B cell (primary cell): ENCODE measurements at regions of chr4 and their contacts with region 1.

Region 1: DNA sequence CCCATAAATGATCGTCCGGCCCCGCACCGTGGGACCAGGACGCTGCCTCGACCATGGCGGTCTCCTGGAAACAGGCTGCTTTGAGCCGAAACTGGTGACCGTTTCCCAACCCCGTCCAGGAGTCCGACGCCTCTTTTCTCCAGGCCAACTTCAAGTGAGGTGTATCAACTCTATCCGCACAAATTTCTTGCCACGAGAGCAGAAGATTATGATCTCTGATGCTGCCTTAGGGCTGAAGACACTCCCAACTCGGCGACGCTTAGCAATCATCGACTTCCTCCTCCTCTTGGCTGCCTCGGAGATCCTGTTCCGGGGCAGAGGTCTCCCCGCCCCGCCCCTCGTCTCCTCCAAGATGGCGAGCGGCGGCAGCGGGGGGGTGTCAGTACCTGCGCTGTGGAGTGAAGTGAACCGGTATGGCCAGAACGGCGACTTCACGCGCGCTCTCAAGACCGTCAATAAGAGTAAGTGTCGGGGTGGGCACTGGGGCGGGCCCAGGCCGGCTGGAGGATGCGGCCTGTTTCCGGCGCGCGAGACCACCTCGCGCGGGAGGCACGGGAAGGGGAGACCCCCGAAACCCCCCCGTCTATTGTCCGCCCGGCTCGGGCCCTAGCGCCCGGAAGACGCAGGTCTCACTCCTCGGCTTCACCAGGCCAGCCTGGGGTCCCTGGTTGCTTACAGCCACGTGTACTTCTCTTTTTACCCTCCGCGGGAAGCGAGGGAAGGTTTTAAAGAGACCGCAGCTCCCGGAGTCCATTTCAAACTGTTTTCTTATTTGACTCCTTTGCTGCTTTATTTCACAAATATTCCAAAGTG is at the start of gene SRP72:
- DNase-seq: peak; percentile 91
- ATAC-seq: peak; percentile 96
- H3K4me3 ChIP-seq: peak within 1 kb of the TSS; percentile 83 to 97 (median 89)
- H3K4me3 Mint-ChIP-seq: peak within 1 kb of the TSS; percentile 99
- H3K27ac ChIP-seq: peak within 1 kb of the TSS; percentile 73 to 81
- H3K27ac Mint-ChIP-seq: peak within 1 kb of the TSS; percentile 96
- H3K4me1 ChIP-seq: peaks cover 38 to 42% of the 10 kb centered on the region in 2 donors
- H3K4me1 Mint-ChIP-seq: peaks cover 56% of the 10 kb centered on the region
- H3K27me3 ChIP-seq: no peaks in the 10 kb centered on the region
- H3K27me3 Mint-ChIP-seq: no peaks in the 10 kb centered on the region
- CTCF ChIP-seq: no peak
- total RNA-seq, gene SRP72: 111 and 114 TPM in 2 replicates

Region 2: DNA sequence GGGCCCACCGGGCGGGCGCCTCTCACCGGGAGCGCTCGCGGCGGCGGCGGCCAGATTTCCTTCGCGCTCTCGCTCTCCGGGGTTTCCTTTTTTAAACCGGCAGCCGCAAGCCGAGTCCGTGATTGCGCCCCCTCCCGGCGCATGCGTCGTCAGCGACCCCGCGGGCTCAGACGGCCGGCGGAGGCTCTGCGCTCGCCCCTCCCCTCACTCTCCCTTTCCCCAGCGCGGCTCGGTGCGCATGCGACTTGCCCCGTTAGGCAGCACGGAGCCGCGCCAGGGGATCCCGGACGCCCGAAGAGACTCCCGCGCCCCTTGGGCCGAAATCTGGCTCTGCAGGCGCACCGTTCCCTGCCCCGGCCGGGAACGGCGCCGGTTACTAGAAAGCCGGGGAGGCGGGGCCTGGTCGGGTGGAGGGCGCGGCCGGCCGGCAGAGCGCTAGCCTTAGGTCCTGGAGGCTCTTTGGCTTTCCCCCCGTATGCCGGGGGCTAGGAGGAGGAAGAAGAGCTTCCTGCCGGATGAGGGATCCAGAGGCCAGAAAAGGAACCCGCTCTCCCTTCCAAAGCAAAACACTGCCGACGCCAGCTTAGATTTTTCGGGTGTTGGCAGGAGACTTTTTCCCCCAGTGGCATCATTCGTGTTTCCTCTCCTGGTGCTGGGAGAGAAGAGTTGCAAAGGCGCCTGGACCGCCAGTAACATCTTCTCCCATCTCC is 920.6 kb before region 1 on chr4 and contains the start of gene CLOCK:
- CTCF ChIA-PET with region 1: no interaction called
- POLR2A ChIA-PET with region 1: no interaction called
- intact Hi-C with region 1: loop called (anchors 10 kb)
- DNase-seq: peak; percentile 94
- ATAC-seq: peak; percentile 75
- H3K4me3 ChIP-seq: peak within 1 kb of the TSS; percentile 67 to 95 (median 79)
- H3K4me3 Mint-ChIP-seq: peak within 1 kb of the TSS; percentile 97
- H3K27ac ChIP-seq: peak within 1 kb of the TSS; percentile 59 to 84
- H3K27ac Mint-ChIP-seq: peak within 1 kb of the TSS; percentile 96
- H3K4me1 ChIP-seq: peaks cover 6 to 9% of the 10 kb centered on the region in 2 donors
- H3K4me1 Mint-ChIP-seq: peaks cover 31% of the 10 kb centered on the region
- H3K27me3 ChIP-seq: no peaks in the 10 kb centered on the region
- H3K27me3 Mint-ChIP-seq: peaks cover 6% of the 10 kb centered on the region
- CTCF ChIP-seq: peak; percentile 58
- total RNA-seq, gene CLOCK: 14.2 and 15.2 TPM in 2 replicates

Region 3: GRCh38 chr4:56240554-56241174 is 226.8 kb before region 1 on chr4:
- CTCF ChIA-PET with region 1: no interaction called
- POLR2A ChIA-PET with region 1: no interaction called
- intact Hi-C with region 1: no loop called
- DNase-seq: no peak
- ATAC-seq: no peak
- H3K4me3 ChIP-seq: no peak overlapping the region
- H3K4me3 Mint-ChIP-seq: no peak overlapping the region
- H3K27ac ChIP-seq: no peak overlapping the region
- H3K27ac Mint-ChIP-seq: no peak overlapping the region
- H3K4me1 ChIP-seq: no peaks in the 10 kb centered on the region
- H3K4me1 Mint-ChIP-seq: no peaks in the 10 kb centered on the region
- H3K27me3 ChIP-seq: no peaks in the 10 kb centered on the region
- H3K27me3 Mint-ChIP-seq: no peaks in the 10 kb centered on the region
- CTCF ChIP-seq: no peak

Region 4: DNA sequence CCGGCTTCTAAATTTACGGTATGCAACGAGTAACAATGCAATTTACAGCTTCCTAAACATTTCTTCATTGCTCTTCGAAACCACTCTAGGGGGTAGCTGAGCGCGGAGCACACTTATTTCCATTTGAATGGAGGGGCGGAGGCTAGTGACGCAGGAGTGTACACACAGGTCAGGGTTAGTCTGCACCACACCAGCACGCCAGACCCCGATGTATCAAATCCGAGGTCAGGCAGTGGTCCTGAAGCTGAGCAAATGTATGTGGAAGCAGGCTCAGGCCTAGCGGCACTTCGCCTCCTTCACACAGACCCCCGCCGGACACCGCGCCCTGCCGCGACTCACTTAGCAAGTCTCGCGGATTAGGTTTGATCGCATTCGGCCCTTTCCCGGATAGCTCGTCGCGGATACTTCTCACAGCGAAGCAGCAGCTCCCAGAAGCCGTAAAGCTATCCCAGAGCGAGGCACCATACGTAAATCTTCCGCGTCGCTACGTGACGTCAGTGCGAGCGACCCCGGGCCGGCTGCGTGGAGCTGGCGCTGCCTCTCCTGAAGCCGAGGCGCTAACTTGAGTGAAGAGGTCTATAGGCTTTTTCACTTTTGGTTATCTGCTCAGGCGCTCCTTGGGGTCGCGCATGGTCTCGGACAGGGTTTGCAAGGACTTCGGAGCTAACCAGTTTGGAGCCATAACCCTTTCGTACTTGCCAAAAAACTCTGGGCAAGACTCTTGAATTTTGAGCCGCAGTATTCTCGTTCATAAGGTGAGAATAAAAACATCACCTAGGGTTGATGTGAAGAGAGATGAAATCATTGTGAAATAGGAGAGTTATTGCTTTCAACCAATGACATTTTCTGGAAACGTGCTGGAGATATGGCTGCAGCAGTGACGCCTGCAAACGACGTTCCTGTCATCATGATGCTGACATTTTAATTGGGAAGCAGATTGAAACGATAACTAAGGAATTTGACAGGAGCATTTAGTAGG is 80.2 kb before region 1 on chr4 and contains the start of gene AASDH:
- CTCF ChIA-PET with region 1: interaction called, 4 read pairs
- POLR2A ChIA-PET with region 1: no interaction called
- intact Hi-C with region 1: loop called (anchors 1 kb)
- DNase-seq: peak; percentile 97
- ATAC-seq: peak; percentile 94
- H3K4me3 ChIP-seq: peak within 1 kb of the TSS; percentile 57 to 97 (median 81)
- H3K4me3 Mint-ChIP-seq: peak within 1 kb of the TSS; percentile 88
- H3K27ac ChIP-seq: peak within 1 kb of the TSS; percentile 86 to 89
- H3K27ac Mint-ChIP-seq: peak within 1 kb of the TSS; percentile 99
- H3K4me1 ChIP-seq: peaks cover 14% of the 10 kb centered on the region in 2 donors
- H3K4me1 Mint-ChIP-seq: peaks cover 30% of the 10 kb centered on the region
- H3K27me3 ChIP-seq: no peaks in the 10 kb centered on the region
- H3K27me3 Mint-ChIP-seq: no peaks in the 10 kb centered on the region
- CTCF ChIP-seq: no peak
- total RNA-seq, gene AASDH: 15.2 and 17.2 TPM in 2 replicates

Region 5: GRCh38 chr4:56530269-56531148 is 63.0 kb after region 1 on chr4:
- CTCF ChIA-PET with region 1: no interaction called
- POLR2A ChIA-PET with region 1: interaction called, 4 read pairs
- intact Hi-C with region 1: loop called (anchors 2 kb)
- DNase-seq: peak; percentile 82
- ATAC-seq: peak; percentile 100
- H3K4me3 ChIP-seq: peak overlapping the region; percentile 56 to 77 (median 73)
- H3K4me3 Mint-ChIP-seq: no peak overlapping the region
- H3K27ac ChIP-seq: no peak overlapping the region
- H3K27ac Mint-ChIP-seq: peak overlapping the region; percentile 12
- H3K4me1 ChIP-seq: peaks cover 7 to 12% of the 10 kb centered on the region in 2 donors
- H3K4me1 Mint-ChIP-seq: peaks cover 4% of the 10 kb centered on the region
- H3K27me3 ChIP-seq: peaks cover 0 to 36% (median 22%) of the 10 kb centered on the region in 4 experiments
- H3K27me3 Mint-ChIP-seq: peaks cover 7% of the 10 kb centered on the region
- CTCF ChIP-seq: no peak

Region 6: GRCh38 chr4:56907489-56908205 is 440.2 kb after region 1 on chr4 and contains the start of gene REST:
- CTCF ChIA-PET with region 1: no interaction called
- POLR2A ChIA-PET with region 1: no interaction called
- intact Hi-C with region 1: loop called (anchors 1 kb)
- DNase-seq: peak; percentile 92
- ATAC-seq: peak; percentile 65
- H3K4me3 ChIP-seq: peak within 1 kb of the TSS; percentile 62 to 98 (median 88)
- H3K4me3 Mint-ChIP-seq: peak within 1 kb of the TSS; percentile 93
- H3K27ac ChIP-seq: peak within 1 kb of the TSS; percentile 47 to 77
- H3K27ac Mint-ChIP-seq: peak within 1 kb of the TSS; percentile 92
- H3K4me1 ChIP-seq: peaks cover 29 to 35% of the 10 kb centered on the region in 2 donors
- H3K4me1 Mint-ChIP-seq: peaks cover 42% of the 10 kb centered on the region
- H3K27me3 ChIP-seq: no peaks in the 10 kb centered on the region
- H3K27me3 Mint-ChIP-seq: peaks cover 3% of the 10 kb centered on the region
- CTCF ChIP-seq: no peak
- total RNA-seq, gene REST: 59.4 and 61.1 TPM in 2 replicates